B cell (primary cell): ENCODE measurements at regions of chr9 and their contacts with region 1.

Region 1: DNA sequence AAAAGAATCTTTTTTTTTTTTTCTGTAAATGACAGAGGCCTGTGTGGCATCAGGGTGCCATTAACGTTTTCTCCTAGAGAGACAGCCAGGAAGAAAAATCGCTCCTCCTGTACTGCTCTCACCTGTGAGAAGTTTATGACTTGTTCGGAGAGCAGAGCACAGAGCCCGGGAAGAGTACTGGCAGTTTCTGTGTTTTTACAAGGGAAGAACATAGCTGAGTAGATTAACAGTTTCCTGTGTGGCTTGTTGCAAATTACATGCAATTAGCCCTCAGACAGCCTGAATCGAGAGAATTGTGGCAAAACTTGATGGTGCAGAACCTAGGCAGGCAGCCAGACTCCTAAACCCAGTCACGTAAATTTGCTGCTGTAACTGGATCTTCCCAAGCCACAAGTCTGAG is 32.1 kb downstream of the PRKACG start:
- DNase-seq: no peak
- ATAC-seq: no peak
- H3K4me3 ChIP-seq: no peak overlapping the region
- H3K4me3 Mint-ChIP-seq: no peak overlapping the region
- H3K27ac ChIP-seq: no peak overlapping the region
- H3K27ac Mint-ChIP-seq: peak overlapping the region; percentile 37
- H3K4me1 ChIP-seq: peaks cover 22 to 24% of the 10 kb centered on the region in 2 donors
- H3K4me1 Mint-ChIP-seq: peaks cover 39% of the 10 kb centered on the region
- H3K27me3 ChIP-seq: no peaks in the 10 kb centered on the region
- H3K27me3 Mint-ChIP-seq: no peaks in the 10 kb centered on the region
- CTCF ChIP-seq: no peak

Region 2: GRCh38 chr9:68919661-68920060 is 62.1 kb before region 1 on chr9:
- CTCF ChIA-PET with region 1: no interaction called
- POLR2A ChIA-PET with region 1: no interaction called
- intact Hi-C with region 1: loop called (anchors 10 kb)
- DNase-seq: peak; percentile 48
- ATAC-seq: peak; percentile 84
- H3K4me3 ChIP-seq: no peak overlapping the region
- H3K4me3 Mint-ChIP-seq: peak overlapping the region; percentile 30
- H3K27ac ChIP-seq: peak overlapping the region; percentile 30 to 67
- H3K27ac Mint-ChIP-seq: peak overlapping the region; percentile 83
- H3K4me1 ChIP-seq: peaks cover 12 to 21% of the 10 kb centered on the region in 2 donors
- H3K4me1 Mint-ChIP-seq: peaks cover 33% of the 10 kb centered on the region
- H3K27me3 ChIP-seq: no peaks in the 10 kb centered on the region
- H3K27me3 Mint-ChIP-seq: no peaks in the 10 kb centered on the region
- CTCF ChIP-seq: no peak

Region 3: DNA sequence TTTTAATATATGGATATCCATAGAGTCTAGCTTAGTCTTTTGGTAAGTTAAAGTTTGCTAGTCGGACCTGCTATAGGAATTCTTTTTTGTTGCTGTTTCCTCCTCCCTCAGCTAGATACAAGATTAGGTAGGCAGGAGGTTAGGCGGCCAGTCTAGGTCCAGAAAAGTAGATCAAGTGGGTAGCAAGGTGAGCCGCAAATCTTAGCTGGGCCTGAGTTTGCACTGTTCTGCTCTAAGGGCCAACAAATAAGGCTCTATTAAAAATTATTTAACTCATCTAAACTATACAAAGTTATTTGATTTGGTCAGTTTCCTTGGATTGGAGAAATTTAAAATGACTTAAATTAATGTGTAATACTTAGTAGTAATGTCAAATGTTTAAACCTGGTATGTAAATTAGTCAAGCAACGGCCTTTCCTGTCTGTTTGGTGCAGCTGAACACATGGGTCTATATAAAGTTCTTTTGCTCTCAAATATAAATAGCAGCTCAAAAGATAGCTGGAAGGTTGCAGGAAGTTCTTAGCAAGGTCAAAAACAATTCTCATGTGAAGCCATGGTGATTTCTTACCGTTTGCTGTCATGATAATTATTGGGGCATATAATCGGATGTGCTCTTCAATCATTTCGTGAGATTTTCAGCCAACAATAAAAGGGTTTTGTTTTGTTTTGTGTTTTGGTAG is 39.9 kb before region 1 on chr9:
- CTCF ChIA-PET with region 1: no interaction called
- POLR2A ChIA-PET with region 1: no interaction called
- intact Hi-C with region 1: loop called (anchors 5 kb)
- DNase-seq: no peak
- ATAC-seq: no peak
- H3K4me3 ChIP-seq: peak overlapping the region in 1 of 5 experiments; percentile 3
- H3K4me3 Mint-ChIP-seq: peak overlapping the region; percentile 42
- H3K27ac ChIP-seq: peak overlapping the region in 1 of 2 donors; percentile 40
- H3K27ac Mint-ChIP-seq: peak overlapping the region; percentile 44
- H3K4me1 ChIP-seq: peaks cover 8 to 11% of the 10 kb centered on the region in 2 donors
- H3K4me1 Mint-ChIP-seq: peaks cover 22% of the 10 kb centered on the region
- H3K27me3 ChIP-seq: no peaks in the 10 kb centered on the region
- H3K27me3 Mint-ChIP-seq: no peaks in the 10 kb centered on the region
- CTCF ChIP-seq: no peak

Region 4: DNA sequence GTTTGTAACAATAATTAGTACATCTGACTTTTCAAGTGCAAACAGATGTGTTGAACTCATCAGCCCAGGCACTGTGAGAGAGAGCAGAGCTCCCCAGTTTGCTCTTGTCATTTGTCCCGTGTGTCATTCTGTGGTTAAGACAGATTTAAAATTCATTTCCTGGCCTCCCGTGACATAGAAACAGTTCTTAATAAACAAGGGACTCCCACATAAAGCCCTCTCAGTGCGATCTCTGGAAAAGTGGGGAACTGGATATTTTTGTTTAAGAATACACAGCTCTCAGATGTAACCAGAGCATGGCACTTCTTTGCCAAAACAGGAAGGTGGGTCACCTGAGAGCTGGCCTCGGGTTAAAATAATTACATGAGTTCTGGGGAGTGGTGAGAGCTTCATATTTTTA is 26.5 kb before region 1 on chr9:
- CTCF ChIA-PET with region 1: no interaction called
- POLR2A ChIA-PET with region 1: no interaction called
- intact Hi-C with region 1: loop called (anchors 2 kb)
- DNase-seq: no peak
- ATAC-seq: no peak
- H3K4me3 ChIP-seq: no peak overlapping the region
- H3K4me3 Mint-ChIP-seq: no peak overlapping the region
- H3K27ac ChIP-seq: no peak overlapping the region
- H3K27ac Mint-ChIP-seq: no peak overlapping the region
- H3K4me1 ChIP-seq: peaks cover 13 to 16% of the 10 kb centered on the region in 2 donors
- H3K4me1 Mint-ChIP-seq: peaks cover 27% of the 10 kb centered on the region
- H3K27me3 ChIP-seq: no peaks in the 10 kb centered on the region
- H3K27me3 Mint-ChIP-seq: no peaks in the 10 kb centered on the region
- CTCF ChIP-seq: no peak